ENCODE measurements at regions of chr3 and their contacts with region 1.

Region 1: GRCh38 chr3:184868477-184868876 is 56.5 kb downstream of the VPS8 start:
- DNase-seq: no peak
- H3K4me3 ChIP-seq: no peak overlapping the region
- H3K27ac ChIP-seq: no peak overlapping the region
- H3K4me1 ChIP-seq: no peaks in the 10 kb centered on the region
- H3K27me3 ChIP-seq: no peaks in the 10 kb centered on the region
- CTCF ChIP-seq: no peak

Region 2: DNA sequence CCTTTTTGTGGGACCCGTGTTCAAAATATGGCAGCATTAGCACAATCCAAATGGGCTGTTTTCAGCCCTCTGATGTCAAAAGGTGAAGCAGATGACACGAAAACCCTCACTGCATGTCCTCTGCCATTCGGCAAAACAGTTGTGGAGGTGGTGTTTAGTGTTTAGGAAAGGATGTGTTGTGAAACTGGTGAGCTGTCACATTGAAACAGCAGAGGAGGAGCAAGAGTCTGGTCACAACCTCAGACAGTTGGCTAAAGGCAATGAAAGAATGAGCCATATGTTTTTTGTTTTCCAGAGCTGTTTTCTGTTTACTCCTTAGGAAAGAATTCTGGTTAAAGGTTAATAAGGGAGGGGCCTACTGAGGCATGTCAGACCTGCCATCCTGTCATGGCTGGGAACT is 84.2 kb after region 1 on chr3:
- CTCF ChIA-PET with region 1: no interaction called
- dilution Hi-C with region 1: loop called (anchors 5 kb)
- in situ Hi-C with region 1: no loop called
- intact Hi-C with region 1: no loop called
- DNase-seq: no peak
- H3K4me3 ChIP-seq: no peak overlapping the region
- H3K27ac ChIP-seq: no peak overlapping the region
- H3K4me1 ChIP-seq: no peaks in the 10 kb centered on the region
- H3K27me3 ChIP-seq: no peaks in the 10 kb centered on the region
- CTCF ChIP-seq: no peak